Caco-2 (cell line): ENCODE measurements at regions of chr2 and their contacts with region 1.

Region 1: DNA sequence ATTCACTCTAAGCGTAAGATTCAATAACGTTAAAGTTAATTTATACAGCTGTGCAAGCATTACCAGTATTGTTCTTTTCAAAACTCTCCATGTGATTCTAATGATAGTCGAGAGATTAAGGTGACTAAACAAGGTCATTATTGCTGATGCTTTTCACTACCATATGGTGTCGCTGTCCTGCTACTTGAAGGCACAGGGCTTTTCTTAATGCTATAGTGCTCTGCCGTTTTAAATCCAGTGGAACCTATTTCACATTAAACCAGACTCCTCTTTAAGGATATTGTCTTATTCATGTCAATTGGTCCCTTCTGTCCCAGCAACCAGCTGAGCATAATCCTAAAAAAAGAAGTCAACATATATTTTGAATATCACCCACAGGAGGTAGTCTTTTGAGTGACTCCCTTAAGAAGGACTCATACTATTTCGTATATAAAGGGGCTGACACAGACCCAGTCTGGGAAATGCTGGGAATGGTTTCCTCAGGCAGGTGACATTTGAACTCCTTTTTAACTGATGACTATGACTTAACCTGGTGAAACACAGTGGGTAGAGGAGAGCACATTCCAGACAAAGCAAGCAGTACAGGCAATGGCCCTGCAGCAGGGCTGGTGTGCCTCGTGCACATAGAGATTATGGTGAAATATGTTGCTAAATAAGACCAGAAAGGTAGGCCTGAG is 53.9 kb upstream of the CYTIP start:
- DNase-seq: peak in 1 of 2 experiments; percentile 14
- H3K4me3 ChIP-seq: no peak overlapping the region
- H3K4me3 Mint-ChIP-seq: no peak overlapping the region
- H3K27ac Mint-ChIP-seq: no peak overlapping the region
- H3K4me1 ChIP-seq: no peaks in the 10 kb centered on the region
- H3K4me1 Mint-ChIP-seq: no peaks in the 10 kb centered on the region
- H3K27me3 ChIP-seq: no peaks in the 10 kb centered on the region
- H3K27me3 Mint-ChIP-seq: no peaks in the 10 kb centered on the region
- CTCF ChIP-seq: peak; percentile 65 to 78

Region 2: GRCh38 chr2:157312866-157313486 is 184.8 kb before region 1 on chr2:
- CTCF ChIA-PET with region 1: no interaction called
- POLR2A ChIA-PET with region 1: no interaction called
- intact Hi-C with region 1: no loop called
- DNase-seq: no peak
- H3K4me3 ChIP-seq: no peak overlapping the region
- H3K4me3 Mint-ChIP-seq: no peak overlapping the region
- H3K27ac Mint-ChIP-seq: no peak overlapping the region
- H3K4me1 ChIP-seq: no peaks in the 10 kb centered on the region
- H3K4me1 Mint-ChIP-seq: no peaks in the 10 kb centered on the region
- H3K27me3 ChIP-seq: no peaks in the 10 kb centered on the region; the same call in 1 of the 2 replicates
- H3K27me3 Mint-ChIP-seq: no peaks in the 10 kb centered on the region
- CTCF ChIP-seq: no peak

Region 3: DNA sequence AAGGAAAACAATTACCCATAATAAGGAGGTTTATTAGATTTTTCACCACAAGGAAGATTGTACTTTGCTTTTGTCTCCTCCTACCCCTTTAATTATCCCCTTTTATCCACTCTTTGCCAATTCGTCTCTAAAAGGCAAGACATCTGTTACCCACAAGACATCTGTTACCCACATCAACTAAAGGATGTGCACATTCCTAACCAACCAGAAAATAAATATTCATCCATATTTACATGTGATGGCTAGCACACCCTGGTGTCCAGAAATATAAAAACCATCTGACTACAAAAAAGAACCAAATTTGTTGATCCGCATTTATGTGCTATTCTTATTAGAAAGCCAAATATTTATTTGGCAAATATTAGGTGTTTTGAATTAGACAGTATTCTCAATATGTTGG is 95.2 kb after region 1 on chr2:
- CTCF ChIA-PET with region 1: no interaction called
- POLR2A ChIA-PET with region 1: no interaction called
- intact Hi-C with region 1: loop called (anchors 1 kb)
- DNase-seq: no peak
- H3K4me3 ChIP-seq: no peak overlapping the region
- H3K4me3 Mint-ChIP-seq: no peak overlapping the region
- H3K27ac Mint-ChIP-seq: no peak overlapping the region
- H3K4me1 ChIP-seq: no peaks in the 10 kb centered on the region
- H3K4me1 Mint-ChIP-seq: no peaks in the 10 kb centered on the region
- H3K27me3 ChIP-seq: no peaks in the 10 kb centered on the region; the same call in 1 of the 2 replicates
- H3K27me3 Mint-ChIP-seq: peaks cover 16% of the 10 kb centered on the region
- CTCF ChIP-seq: peak; percentile 16 to 20